Caco-2 (cell line): ENCODE measurements at regions of chr12 and their contacts with region 1.

Region 1: DNA sequence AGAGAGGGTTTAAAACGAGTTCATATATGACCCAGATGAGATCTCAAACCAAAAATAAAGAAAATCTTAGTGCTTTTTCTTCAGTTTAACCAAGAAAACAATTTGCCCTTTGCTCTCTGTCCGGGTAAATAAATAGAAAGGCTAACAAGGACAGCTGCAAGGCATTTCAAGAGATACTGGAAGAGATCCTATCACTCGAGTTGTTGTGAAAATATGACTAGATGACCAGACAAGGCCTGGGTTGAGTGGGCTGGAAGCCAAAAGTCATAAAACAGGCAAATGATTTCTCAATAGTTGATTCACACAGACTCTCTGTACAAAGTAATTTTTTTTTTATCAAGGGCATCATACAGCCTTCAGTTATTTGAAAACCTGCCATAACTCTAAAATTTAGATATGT is 55.9 kb upstream of the AVPR1A start:
- DNase-seq: peak; percentile 60 to 69
- H3K4me3 ChIP-seq: no peak overlapping the region
- H3K4me3 Mint-ChIP-seq: no peak overlapping the region
- H3K27ac Mint-ChIP-seq: peak overlapping the region; percentile 41
- H3K4me1 ChIP-seq: peaks cover 27% of the 10 kb centered on the region
- H3K4me1 Mint-ChIP-seq: peaks cover 14% of the 10 kb centered on the region
- H3K27me3 ChIP-seq: no peaks in the 10 kb centered on the region
- H3K27me3 Mint-ChIP-seq: no peaks in the 10 kb centered on the region
- CTCF ChIP-seq: no peak

Region 2: GRCh38 chr12:63151623-63152320 is 55.1 kb before region 1 on chr12:
- CTCF ChIA-PET with region 1: no interaction called
- POLR2A ChIA-PET with region 1: no interaction called
- intact Hi-C with region 1: loop called (anchors 1 kb)
- DNase-seq: peak; percentile 35 to 40
- H3K4me3 ChIP-seq: no peak overlapping the region
- H3K4me3 Mint-ChIP-seq: no peak overlapping the region
- H3K27ac Mint-ChIP-seq: no peak overlapping the region
- H3K4me1 ChIP-seq: no peaks in the 10 kb centered on the region
- H3K4me1 Mint-ChIP-seq: no peaks in the 10 kb centered on the region
- H3K27me3 ChIP-seq: no peaks in the 10 kb centered on the region
- H3K27me3 Mint-ChIP-seq: no peaks in the 10 kb centered on the region
- CTCF ChIP-seq: peak; percentile 59 to 74

Region 3: DNA sequence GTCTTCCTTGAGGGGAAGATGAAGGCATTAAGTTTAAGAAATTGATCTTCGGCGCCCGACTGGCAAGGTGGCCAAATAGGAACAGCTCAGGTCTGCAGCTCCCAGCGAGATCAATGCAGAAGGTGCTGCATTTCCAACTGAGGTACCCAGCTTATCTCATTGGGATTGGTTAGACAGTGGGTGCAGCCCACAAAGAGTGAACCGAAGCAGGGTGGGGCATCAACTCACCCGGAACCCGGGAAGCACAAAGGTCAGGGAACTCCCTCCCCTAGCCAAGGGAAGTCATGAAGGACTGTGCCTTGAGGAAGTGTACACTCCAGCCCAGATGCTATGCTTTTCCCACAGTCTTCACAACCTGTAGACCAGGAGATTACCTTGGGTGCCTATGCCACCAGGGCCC is 10.7 kb before region 1 on chr12:
- CTCF ChIA-PET with region 1: no interaction called
- POLR2A ChIA-PET with region 1: no interaction called
- intact Hi-C with region 1: loop called (anchors 1 kb)
- DNase-seq: peak; percentile 56 to 79
- H3K4me3 ChIP-seq: no peak overlapping the region
- H3K4me3 Mint-ChIP-seq: peak overlapping the region; percentile 16
- H3K27ac Mint-ChIP-seq: peak overlapping the region; percentile 46
- H3K4me1 ChIP-seq: peaks cover 42% of the 10 kb centered on the region
- H3K4me1 Mint-ChIP-seq: peaks cover 30% of the 10 kb centered on the region
- H3K27me3 ChIP-seq: no peaks in the 10 kb centered on the region
- H3K27me3 Mint-ChIP-seq: no peaks in the 10 kb centered on the region
- CTCF ChIP-seq: no peak

Region 4: DNA sequence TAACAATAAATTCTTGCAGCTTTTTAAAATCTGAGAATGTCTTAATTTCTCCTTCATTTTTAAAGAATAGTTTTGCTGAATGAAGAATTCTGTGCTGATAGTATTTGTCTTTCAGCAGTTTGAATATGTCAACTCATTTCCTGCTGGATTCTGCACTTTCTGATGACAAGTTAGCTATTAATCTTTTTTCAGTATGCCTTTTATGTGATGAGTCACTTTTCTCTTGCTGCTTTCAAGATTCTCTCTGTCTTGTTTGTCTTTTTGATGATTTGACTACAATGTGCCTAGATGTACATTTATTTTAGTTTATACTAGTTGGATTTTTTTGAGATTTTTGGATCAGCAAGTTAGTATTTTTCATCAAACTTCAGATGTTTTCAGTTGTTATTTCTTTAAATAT is 32.0 kb after region 1 on chr12:
- CTCF ChIA-PET with region 1: no interaction called
- POLR2A ChIA-PET with region 1: no interaction called
- intact Hi-C with region 1: no loop called
- DNase-seq: no peak
- H3K4me3 ChIP-seq: no peak overlapping the region
- H3K4me3 Mint-ChIP-seq: no peak overlapping the region
- H3K27ac Mint-ChIP-seq: no peak overlapping the region
- H3K4me1 ChIP-seq: peaks cover 6% of the 10 kb centered on the region; the same call in 1 of the 2 replicates
- H3K4me1 Mint-ChIP-seq: peaks cover 5% of the 10 kb centered on the region
- H3K27me3 ChIP-seq: no peaks in the 10 kb centered on the region
- H3K27me3 Mint-ChIP-seq: no peaks in the 10 kb centered on the region
- CTCF ChIP-seq: no peak

Region 5: DNA sequence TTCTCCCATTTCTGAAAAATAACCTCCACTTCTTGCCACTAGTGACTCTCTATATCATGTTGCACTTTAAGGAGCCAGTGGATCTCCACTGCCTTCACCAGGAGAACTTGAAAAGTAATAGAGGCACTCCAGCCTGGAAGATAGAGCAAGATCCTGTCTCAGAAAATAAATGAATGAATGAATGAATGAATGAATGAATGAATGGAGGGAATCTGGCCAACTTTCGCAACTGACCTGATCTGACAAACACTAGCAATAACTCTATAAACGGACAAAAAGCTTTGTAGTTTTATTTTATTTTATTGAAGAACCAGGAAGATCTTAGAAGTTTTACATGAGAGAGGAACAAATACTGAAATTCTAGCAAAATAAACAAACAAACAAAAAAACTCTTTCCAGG is 53.8 kb after region 1 on chr12:
- CTCF ChIA-PET with region 1: no interaction called
- POLR2A ChIA-PET with region 1: no interaction called
- intact Hi-C with region 1: loop called (anchors 5 kb)
- DNase-seq: no peak
- H3K4me3 ChIP-seq: no peak overlapping the region
- H3K4me3 Mint-ChIP-seq: no peak overlapping the region
- H3K27ac Mint-ChIP-seq: no peak overlapping the region
- H3K4me1 ChIP-seq: peaks cover 26% of the 10 kb centered on the region
- H3K4me1 Mint-ChIP-seq: peaks cover 22% of the 10 kb centered on the region
- H3K27me3 ChIP-seq: no peaks in the 10 kb centered on the region
- H3K27me3 Mint-ChIP-seq: no peaks in the 10 kb centered on the region
- CTCF ChIP-seq: no peak